Activated T-helper 1 cell treated with anti-CD3 and anti-CD28 coated beads, Interleukin-12 subunit alpha, Interleukin-12 subunit beta, Interleukin-2, Interleukin-4 antibody, amounts not matched to agents 30 ng/mL and 10 ng/mL and 1 ng/mL, durations not matched to agents 14 hours and 24 hours and 36 hours (primary cell): ENCODE measurements at regions of chr13 and their contacts with region 1.

Region 1: DNA sequence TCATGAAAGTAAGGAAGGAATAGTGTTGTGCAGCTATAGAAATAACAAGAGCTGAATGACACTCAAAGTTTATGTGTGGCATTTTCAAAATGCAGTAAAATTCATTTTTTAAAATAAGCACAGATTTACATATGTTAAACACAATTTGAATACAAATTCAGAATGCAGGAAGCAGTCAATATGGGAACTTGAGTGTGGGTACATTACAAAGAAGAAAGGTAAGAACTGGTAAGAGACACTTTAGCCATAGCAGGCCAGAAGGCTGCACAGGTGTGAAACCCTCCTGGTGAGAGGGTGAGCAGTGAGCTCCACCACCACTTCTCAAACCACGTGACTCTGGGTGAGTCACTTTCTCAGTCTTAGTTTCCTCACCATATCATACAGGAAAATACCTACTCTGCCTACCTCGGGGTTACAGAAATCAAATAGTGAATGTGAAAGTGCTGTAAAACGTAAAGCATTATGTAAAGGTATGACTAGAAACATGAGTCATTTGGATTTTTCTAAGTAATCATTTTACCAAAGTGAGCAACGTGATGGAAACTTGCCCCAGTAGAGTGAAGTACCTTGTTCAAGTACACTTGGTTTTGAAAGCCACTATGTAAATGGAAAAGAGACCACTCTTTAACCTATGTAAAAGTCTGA is 40.5 kb downstream of the USP12 start:
- DNase-seq: peak; percentile 80
- H3K4me3 Mint-ChIP-seq: peak overlapping the region; percentile 60
- H3K27ac Mint-ChIP-seq: peak overlapping the region; percentile 77
- H3K4me1 Mint-ChIP-seq: peaks cover 89% of the 10 kb centered on the region
- H3K27me3 Mint-ChIP-seq: no peaks in the 10 kb centered on the region

Region 2: GRCh38 chr13:25699056-25699455 is 1432.0 kb before region 1 on chr13:
- intact Hi-C with region 1: no loop called
- DNase-seq: no peak
- H3K4me3 Mint-ChIP-seq: no peak overlapping the region
- H3K27ac Mint-ChIP-seq: no peak overlapping the region
- H3K4me1 Mint-ChIP-seq: peaks cover 6% of the 10 kb centered on the region
- H3K27me3 Mint-ChIP-seq: peaks cover 2% of the 10 kb centered on the region

Region 3: DNA sequence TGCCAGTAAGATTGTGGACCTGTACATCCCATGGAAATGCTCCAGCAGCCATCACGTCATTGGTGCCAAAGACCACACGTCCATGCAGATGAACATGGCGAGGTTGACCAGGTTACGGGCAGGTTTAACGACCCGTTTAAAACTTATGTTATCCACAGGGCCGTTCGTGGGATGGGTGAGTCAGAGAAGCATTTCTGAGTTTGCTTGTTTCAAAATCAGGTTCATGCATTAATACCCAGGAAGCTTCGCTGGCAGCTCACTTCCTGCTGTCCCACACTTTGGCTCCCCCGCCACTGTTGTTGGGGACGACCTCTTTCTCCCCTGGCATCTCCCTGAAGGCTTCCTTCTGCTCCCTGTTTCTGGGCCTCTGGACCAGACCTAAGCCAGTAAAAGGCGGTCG is 153.5 kb before region 1 on chr13:
- intact Hi-C with region 1: no loop called
- DNase-seq: no peak
- H3K4me3 Mint-ChIP-seq: no peak overlapping the region
- H3K27ac Mint-ChIP-seq: no peak overlapping the region
- H3K4me1 Mint-ChIP-seq: peaks cover 3% of the 10 kb centered on the region
- H3K27me3 Mint-ChIP-seq: no peaks in the 10 kb centered on the region

Region 4: GRCh38 chr13:26996965-26997752 is 133.9 kb before region 1 on chr13:
- intact Hi-C with region 1: loop called (anchors 1 kb)
- DNase-seq: no peak
- H3K4me3 Mint-ChIP-seq: peak overlapping the region; percentile 34
- H3K27ac Mint-ChIP-seq: peak overlapping the region; percentile 49
- H3K4me1 Mint-ChIP-seq: peaks cover 8% of the 10 kb centered on the region
- H3K27me3 Mint-ChIP-seq: peaks cover 8% of the 10 kb centered on the region

Region 5: DNA sequence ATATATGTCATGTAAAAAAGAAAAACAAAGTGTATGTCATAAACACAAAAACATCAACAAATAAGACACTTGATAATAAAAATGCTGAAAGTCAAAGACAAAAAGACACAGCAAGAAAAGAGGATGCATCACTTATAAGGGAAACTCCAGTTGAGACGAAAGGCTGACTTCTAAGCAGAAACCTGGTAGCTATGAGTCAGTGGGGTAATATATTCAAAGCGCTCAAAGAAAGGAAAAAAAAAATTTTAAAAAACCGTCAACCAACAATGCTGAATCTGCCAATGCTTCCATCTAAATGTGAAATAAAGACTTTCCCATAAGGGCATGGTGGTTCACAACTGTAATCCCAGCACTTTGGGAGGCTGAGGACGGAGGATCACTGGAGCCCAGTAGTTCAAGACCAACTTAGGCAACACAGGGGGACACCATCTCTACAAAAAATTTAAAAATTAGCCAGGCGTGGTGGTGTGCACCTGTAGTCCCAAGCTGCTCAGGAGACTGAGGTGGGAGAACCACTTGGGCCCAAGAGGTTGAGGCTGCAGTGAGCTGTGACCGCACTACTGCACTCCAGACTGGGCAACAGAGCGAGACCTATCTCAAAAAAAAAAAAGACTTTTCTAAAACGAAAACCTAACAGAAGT is 16.5 kb after region 1 on chr13:
- intact Hi-C with region 1: loop called (anchors 1 kb)
- DNase-seq: no peak
- H3K4me3 Mint-ChIP-seq: peak overlapping the region; percentile 55
- H3K27ac Mint-ChIP-seq: peak overlapping the region; percentile 93
- H3K4me1 Mint-ChIP-seq: peaks cover 71% of the 10 kb centered on the region
- H3K27me3 Mint-ChIP-seq: no peaks in the 10 kb centered on the region

Region 6: DNA sequence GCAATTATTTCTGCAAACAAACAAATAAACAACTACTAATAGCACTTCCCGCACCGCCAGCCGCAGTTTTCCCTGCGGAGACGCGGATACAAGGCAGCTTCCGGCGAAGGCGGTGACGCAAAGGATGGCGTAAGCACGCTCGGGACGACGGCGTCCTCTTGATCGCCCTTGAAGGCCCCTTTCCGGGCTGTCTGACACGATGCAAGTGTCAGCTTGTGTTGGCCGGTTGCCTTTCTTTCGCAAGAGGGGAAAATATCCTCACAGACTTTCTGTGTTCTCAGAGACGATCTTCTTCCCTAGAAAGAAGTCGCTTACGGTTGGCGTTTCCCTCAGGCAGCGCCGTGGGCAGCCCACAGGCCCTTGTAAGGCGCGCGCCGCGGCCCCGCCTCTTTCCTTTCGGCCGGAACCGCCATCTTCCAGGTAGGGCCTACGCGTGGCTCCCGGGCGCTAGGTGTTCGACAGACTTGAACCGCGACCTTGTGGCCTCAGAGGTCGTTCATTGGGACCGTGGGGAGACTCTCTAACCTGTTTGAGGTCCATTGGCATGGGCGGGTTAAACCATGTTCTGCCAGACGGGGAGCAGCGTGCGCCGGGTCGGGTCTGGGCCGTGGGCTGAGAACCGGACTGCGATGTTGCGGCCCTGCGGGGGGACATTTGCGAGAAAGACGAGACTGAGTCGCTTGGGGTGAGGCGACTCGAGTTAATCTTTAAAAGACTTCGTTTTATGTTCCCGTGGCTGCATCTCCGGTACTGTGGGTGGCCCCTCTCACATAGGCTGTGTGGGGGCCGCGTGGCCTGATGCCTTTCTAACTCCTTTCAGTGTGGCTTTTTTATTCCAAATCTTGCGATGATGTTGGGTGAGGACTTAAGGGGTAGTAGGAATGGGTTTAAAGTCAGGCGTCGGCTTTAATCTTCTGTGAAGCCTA is 120.3 kb after region 1 on chr13 and contains the start of gene RPL21:
- intact Hi-C with region 1: loop called (anchors 1 kb)
- DNase-seq: peak; percentile 86
- H3K4me3 Mint-ChIP-seq: peak within 1 kb of the TSS; percentile 94
- H3K27ac Mint-ChIP-seq: peak within 1 kb of the TSS; percentile 91
- H3K4me1 Mint-ChIP-seq: peaks cover 40% of the 10 kb centered on the region
- H3K27me3 Mint-ChIP-seq: no peaks in the 10 kb centered on the region
- total RNA-seq, gene RPL21: 1,045 and 1,084 TPM in 2 replicates

Region 7: DNA sequence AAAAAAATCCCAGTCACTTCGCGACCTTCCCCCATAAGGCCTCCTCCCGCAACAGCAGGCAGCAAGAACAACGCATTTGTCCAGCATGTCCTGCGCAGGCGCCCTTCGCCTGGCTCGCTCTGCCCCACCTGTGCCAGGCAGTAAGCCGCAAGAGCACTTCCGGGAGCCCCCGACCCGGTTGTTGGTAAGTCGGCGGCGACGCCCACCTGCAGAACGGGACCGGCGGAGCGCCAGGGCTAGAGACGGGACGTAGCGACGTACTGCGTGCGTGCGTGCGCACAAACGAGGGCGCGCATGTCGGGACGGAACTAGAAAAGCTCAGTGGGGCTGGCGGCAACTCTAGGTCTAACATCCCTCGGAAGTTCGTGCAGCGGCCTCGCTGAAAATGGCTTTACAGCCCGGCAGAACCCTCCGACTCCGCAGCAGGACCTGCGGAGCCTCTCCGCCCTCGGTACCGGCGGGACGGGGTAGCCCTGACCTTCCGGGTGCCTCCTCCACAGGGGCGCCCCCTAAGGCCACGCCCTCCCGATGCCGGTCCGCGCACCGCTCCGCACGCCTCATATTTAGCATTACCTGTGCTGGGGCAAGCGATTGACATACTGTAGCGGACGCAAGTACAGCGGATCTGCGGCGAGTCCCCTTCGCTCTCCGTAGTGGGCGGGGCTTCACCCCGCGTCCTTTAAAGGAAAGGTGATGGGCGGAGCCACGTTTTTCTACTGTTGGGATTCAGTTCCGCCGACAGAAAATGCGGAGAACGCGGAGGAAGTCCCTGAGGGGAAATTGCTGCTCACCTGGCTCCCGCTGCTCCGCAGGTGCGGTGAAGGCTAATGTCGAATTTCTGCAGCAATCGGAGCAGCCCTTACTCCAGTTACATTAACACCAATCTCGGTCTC is 319.1 kb after region 1 on chr13 and contains the start of gene MTIF3:
- intact Hi-C with region 1: loop called (anchors 1 kb)
- DNase-seq: peak; percentile 95
- H3K4me3 Mint-ChIP-seq: peak within 1 kb of the TSS; percentile 91
- H3K27ac Mint-ChIP-seq: peak within 1 kb of the TSS; percentile 93
- H3K4me1 Mint-ChIP-seq: peaks cover 58% of the 10 kb centered on the region
- H3K27me3 Mint-ChIP-seq: no peaks in the 10 kb centered on the region
- total RNA-seq, gene MTIF3: 30.4 and 36.0 TPM in 2 replicates